ENCODE measurements at regions of chr5 and their contacts with region 1.

Region 1: GRCh38 chr5:150357326-150358260 is at the start of gene TCOF1:
- DNase-seq: peak; percentile 100
- H3K4me3 Mint-ChIP-seq: peak within 1 kb of the TSS; percentile 92
- H3K27ac Mint-ChIP-seq: peak within 1 kb of the TSS; percentile 93
- H3K4me1 Mint-ChIP-seq: peaks cover 35% of the 10 kb centered on the region
- H3K27me3 Mint-ChIP-seq: peaks cover 12% of the 10 kb centered on the region
- total RNA-seq, gene TCOF1: 130 and 140 TPM in 2 replicates

Region 2: DNA sequence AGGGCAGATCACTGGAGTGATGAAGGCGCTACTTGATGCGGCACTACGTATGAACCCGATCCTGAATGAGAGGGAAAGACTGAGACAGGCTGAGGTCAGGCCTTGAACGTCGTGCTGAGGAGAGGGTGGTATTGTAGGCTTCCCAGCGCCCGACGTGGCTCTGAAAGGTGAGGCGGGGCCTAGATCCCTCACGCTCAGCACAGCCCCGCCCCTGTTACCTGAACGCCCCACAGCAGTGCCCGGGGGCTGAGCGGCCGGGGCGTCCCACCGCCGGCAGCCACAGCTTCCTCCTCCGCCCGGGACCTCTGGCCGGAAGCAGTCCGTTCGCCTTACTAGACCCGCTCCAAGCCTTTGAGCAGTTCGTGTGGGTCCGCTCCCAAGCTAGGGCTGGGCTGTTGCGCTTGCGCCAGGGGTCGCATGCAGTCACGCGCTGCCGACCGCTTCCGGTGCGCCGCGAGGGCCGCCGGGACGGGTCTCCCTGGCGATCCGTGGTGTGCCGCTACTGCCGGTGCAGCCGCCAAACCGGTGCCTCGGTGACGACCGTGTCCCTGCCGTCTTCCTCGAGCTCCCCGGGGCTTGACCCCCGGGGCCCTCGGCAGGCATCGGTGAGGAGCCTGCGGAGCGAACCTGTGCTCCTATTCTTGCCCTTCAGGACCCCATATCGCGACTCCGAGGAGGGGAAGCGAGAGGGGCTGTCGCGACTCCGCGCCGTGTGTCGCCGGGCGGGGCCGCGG is 357.2 kb before region 1 on chr5 and contains the starts of genes HMGXB3 and TIGD6:
- intact Hi-C with region 1: loop called (anchors 5 kb)
- DNase-seq: peak; percentile 96
- H3K4me3 Mint-ChIP-seq: peak within 1 kb of the TSS; percentile 86
- H3K27ac Mint-ChIP-seq: peak within 1 kb of the TSS; percentile 97
- H3K4me1 Mint-ChIP-seq: peaks cover 41% of the 10 kb centered on the region
- H3K27me3 Mint-ChIP-seq: no peaks in the 10 kb centered on the region
- total RNA-seq, gene HMGXB3: 43.1 and 47.8 TPM in 2 replicates
- total RNA-seq, gene TIGD6: 2.5 TPM in 2 replicates

Region 3: DNA sequence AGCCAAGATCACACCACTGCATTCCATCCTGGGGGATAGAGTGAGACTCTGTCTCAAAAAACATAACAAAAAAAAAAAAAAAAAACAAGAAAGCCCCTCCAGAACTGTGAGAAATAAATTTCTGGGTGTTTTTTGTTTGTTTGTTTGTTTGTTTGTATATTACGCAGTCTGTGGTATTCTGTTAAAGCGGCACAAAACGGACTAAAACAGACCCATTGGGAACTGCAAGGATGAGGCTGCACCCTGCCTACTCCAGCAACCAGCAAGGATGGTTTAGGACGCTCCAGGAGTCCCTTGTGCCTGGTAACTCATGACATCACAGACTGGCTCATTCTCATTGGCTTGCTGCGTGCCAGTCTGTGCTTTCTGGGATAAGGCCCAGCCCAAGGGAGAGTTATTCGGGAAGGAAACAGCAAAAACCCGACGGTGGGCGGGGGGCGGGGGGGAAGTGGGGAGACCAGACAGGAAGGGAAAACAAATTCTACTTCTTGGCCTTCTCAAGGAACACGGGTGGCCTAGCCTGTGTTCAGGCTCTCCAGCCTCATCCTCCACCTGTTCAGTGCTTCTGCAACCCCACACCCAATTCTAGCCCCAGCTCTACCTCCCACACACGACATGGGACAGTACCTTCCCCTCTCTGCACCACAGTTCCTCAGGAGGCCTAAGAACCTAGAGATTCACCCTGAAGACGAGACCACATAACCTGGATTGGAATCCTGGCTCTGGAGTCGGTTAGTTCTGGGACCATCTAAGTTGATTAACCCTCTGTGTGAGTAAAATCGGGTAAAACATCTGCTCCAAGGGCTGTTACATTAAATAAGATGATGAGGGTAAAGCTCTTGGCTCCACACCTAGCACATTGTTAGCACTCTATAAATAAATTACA is 52.3 kb after region 1 on chr5:
- intact Hi-C with region 1: loop called (anchors 1 kb)
- DNase-seq: peak; percentile 85
- H3K4me3 Mint-ChIP-seq: peak overlapping the region; percentile 96
- H3K27ac Mint-ChIP-seq: peak overlapping the region; percentile 98
- H3K4me1 Mint-ChIP-seq: peaks cover 34% of the 10 kb centered on the region
- H3K27me3 Mint-ChIP-seq: no peaks in the 10 kb centered on the region

Region 4: DNA sequence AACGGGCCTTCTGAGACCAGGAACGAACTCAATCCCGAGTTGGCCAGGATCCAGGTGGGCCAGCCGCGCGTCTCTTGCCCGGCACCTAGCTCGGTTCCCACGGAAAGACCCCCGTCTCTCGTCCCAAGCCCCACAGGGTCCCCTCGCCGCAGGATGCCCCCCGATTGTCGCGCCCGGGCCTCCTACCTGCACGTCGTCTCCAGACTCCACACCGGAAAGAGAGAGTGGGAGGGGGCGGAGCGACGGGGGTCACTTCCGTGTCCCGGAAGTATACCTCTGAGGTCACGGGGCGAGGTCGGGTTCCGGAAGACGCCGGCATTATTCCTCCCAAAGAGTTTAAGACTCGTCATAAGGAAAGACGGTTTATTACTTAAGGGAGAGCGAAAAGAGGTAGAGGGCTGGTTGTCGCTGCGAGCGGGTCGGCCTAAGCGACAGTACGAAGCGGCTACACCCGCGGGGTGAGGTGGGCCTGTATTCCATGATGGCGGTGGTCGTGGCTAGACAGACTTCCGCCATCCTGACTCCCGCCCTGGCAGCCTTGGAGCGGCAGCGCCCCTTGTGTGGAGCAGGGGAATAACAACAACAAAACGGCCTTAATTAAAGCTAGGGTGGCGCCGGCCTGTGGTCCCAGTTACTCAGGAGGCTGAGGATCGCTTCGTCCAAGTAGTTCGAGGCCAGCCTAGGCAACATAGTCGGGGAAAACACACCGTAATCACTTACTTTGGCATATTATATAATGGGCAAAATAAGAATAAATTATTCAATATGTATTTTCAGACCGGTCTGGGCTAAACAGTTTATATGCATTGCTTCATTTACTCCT is 92.1 kb after region 1 on chr5 and contains the start of gene RPS14:
- intact Hi-C with region 1: loop called (anchors 1 kb)
- DNase-seq: peak; percentile 98
- H3K4me3 Mint-ChIP-seq: peak within 1 kb of the TSS; percentile 93
- H3K27ac Mint-ChIP-seq: peak within 1 kb of the TSS; percentile 97
- H3K4me1 Mint-ChIP-seq: peaks cover 24% of the 10 kb centered on the region
- H3K27me3 Mint-ChIP-seq: no peaks in the 10 kb centered on the region
- total RNA-seq, gene RPS14: 2,567 and 2,587 TPM in 2 replicates